Activated B cell treated with CpG ODN at 0.5 μM for 24 hours (primary cell): ENCODE measurements at regions of chr1 and their contacts with region 1.

Region 1: GRCh38 chr1:30779294-30780071 is 21.9 kb upstream of the LAPTM5 start:
- DNase-seq: peak; percentile 96
- ATAC-seq: peak; percentile 77
- H3K4me3 Mint-ChIP-seq: peak overlapping the region; percentile 15
- H3K27ac Mint-ChIP-seq: peak overlapping the region; percentile 87
- H3K4me1 Mint-ChIP-seq: peaks cover 47% of the 10 kb centered on the region
- H3K27me3 Mint-ChIP-seq: no peaks in the 10 kb centered on the region
- CTCF ChIP-seq: peak; percentile 79

Region 2: GRCh38 chr1:30732277-30732996 is 47.0 kb before region 1 on chr1:
- CTCF ChIA-PET with region 1: interaction called, 48 read pairs
- POLR2A ChIA-PET with region 1: interaction called, 24 read pairs
- intact Hi-C with region 1: loop called (anchors 2 kb)
- DNase-seq: no peak
- ATAC-seq: peak; percentile 57
- H3K4me3 Mint-ChIP-seq: no peak overlapping the region
- H3K27ac Mint-ChIP-seq: peak overlapping the region; percentile 70
- H3K4me1 Mint-ChIP-seq: peaks cover 72% of the 10 kb centered on the region
- H3K27me3 Mint-ChIP-seq: no peaks in the 10 kb centered on the region
- CTCF ChIP-seq: no peak

Region 3: GRCh38 chr1:30749691-30750583 is 29.5 kb before region 1 on chr1:
- CTCF ChIA-PET with region 1: interaction called, 46 read pairs
- POLR2A ChIA-PET with region 1: interaction called, 177 read pairs
- intact Hi-C with region 1: no loop called
- DNase-seq: peak; percentile 59
- ATAC-seq: peak; percentile 33
- H3K4me3 Mint-ChIP-seq: peak overlapping the region; percentile 79
- H3K27ac Mint-ChIP-seq: peak overlapping the region; percentile 96
- H3K4me1 Mint-ChIP-seq: peaks cover 95% of the 10 kb centered on the region
- H3K27me3 Mint-ChIP-seq: no peaks in the 10 kb centered on the region
- CTCF ChIP-seq: no peak

Region 4: GRCh38 chr1:30763651-30764248 is 15.7 kb before region 1 on chr1:
- CTCF ChIA-PET with region 1: interaction called, 31 read pairs
- POLR2A ChIA-PET with region 1: interaction called, 177 read pairs
- intact Hi-C with region 1: no loop called
- DNase-seq: no peak
- ATAC-seq: no peak
- H3K4me3 Mint-ChIP-seq: no peak overlapping the region
- H3K27ac Mint-ChIP-seq: peak overlapping the region; percentile 80
- H3K4me1 Mint-ChIP-seq: peaks cover 76% of the 10 kb centered on the region
- H3K27me3 Mint-ChIP-seq: no peaks in the 10 kb centered on the region
- CTCF ChIP-seq: no peak

Region 5: DNA sequence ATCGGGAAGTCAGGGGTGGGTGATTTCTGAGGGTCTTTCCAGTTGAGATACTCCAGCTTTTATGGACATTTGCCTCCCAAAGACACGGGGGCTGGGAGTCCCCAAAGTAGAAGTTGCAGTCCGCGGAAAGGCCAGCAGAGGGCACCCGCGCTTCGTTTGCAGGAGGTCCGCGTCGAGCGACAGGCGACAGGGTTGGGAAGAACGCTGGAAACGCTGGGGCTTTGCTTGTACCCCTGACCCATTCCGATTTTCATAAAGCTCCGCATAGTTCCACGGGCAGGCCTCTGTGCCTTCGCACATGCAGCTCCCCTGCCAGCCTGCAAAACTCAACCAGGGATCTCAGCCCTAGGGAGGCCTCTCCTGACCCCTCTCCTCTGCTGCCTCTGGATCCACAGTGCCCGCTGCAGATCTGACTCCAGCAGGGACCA is 22.3 kb after region 1 on chr1:
- CTCF ChIA-PET with region 1: interaction called, 40 read pairs
- POLR2A ChIA-PET with region 1: no interaction called
- intact Hi-C with region 1: loop called (anchors 1 kb)
- DNase-seq: peak; percentile 83
- ATAC-seq: peak; percentile 74
- H3K4me3 Mint-ChIP-seq: no peak overlapping the region
- H3K27ac Mint-ChIP-seq: no peak overlapping the region
- H3K4me1 Mint-ChIP-seq: peaks cover 19% of the 10 kb centered on the region
- H3K27me3 Mint-ChIP-seq: peaks cover 14% of the 10 kb centered on the region
- CTCF ChIP-seq: peak; percentile 64

Region 6: GRCh38 chr1:30929135-30929889 is 149.8 kb after region 1 on chr1:
- CTCF ChIA-PET with region 1: interaction called, 21 read pairs
- POLR2A ChIA-PET with region 1: interaction called, 3 read pairs
- intact Hi-C with region 1: loop called (anchors 1 kb)
- DNase-seq: no peak
- ATAC-seq: peak; percentile 56
- H3K4me3 Mint-ChIP-seq: no peak overlapping the region
- H3K27ac Mint-ChIP-seq: no peak overlapping the region
- H3K4me1 Mint-ChIP-seq: peaks cover 14% of the 10 kb centered on the region
- H3K27me3 Mint-ChIP-seq: no peaks in the 10 kb centered on the region
- CTCF ChIP-seq: peak; percentile 76

Region 7: GRCh38 chr1:31422505-31423319 is 643.2 kb after region 1 on chr1:
- CTCF ChIA-PET with region 1: no interaction called
- POLR2A ChIA-PET with region 1: no interaction called
- intact Hi-C with region 1: loop called (anchors 5 kb)
- DNase-seq: peak; percentile 70
- ATAC-seq: peak; percentile 53
- H3K4me3 Mint-ChIP-seq: peak overlapping the region; percentile 58
- H3K27ac Mint-ChIP-seq: peak overlapping the region; percentile 73
- H3K4me1 Mint-ChIP-seq: peaks cover 25% of the 10 kb centered on the region
- H3K27me3 Mint-ChIP-seq: no peaks in the 10 kb centered on the region
- CTCF ChIP-seq: peak; percentile 78